Heart left ventricle (tissue), 16 donors: ENCODE measurements at regions of chr1 and their contacts with region 1.

Region 1: GRCh38 chr1:77538956-77539518 is 143.4 kb downstream of the ZZZ3 start:
- DNase-seq: peak in 2 of 5 donors; percentile 29 to 33
- ATAC-seq: peak; percentile 54 to 84 (median 69)
- H3K4me3 ChIP-seq: no peak overlapping the region
- H3K27ac ChIP-seq: peak overlapping the region in 8 of 12 donors; percentile 11 to 68 (median 44)
- H3K4me1 ChIP-seq: peaks cover 0 to 17% (median 6%) of the 10 kb centered on the region in 12 donors
- H3K27me3 ChIP-seq: no peaks in the 10 kb centered on the region
- CTCF ChIP-seq: no peak
- POLR2A ChIP-seq: no peak

Region 2: GRCh38 chr1:77143529-77144121 is 395.4 kb before region 1 on chr1:
- intact Hi-C with region 1: loop called in 7 of 10 experiments (anchors 5 to 10 kb)
- DNase-seq: no peak
- ATAC-seq: no peak
- H3K4me3 ChIP-seq: no peak overlapping the region
- H3K27ac ChIP-seq: no peak overlapping the region
- H3K4me1 ChIP-seq: no peaks in the 10 kb centered on the region
- H3K27me3 ChIP-seq: no peaks in the 10 kb centered on the region
- CTCF ChIP-seq: peak in 9 of 12 donors; percentile 14 to 46 (median 31)
- POLR2A ChIP-seq: no peak

Region 3: GRCh38 chr1:77156214-77156613 is 382.8 kb before region 1 on chr1:
- intact Hi-C with region 1: loop called in 1 of 10 experiments (anchors 5 kb)
- DNase-seq: no peak
- ATAC-seq: no peak
- H3K4me3 ChIP-seq: no peak overlapping the region
- H3K27ac ChIP-seq: no peak overlapping the region
- H3K4me1 ChIP-seq: no peaks in the 10 kb centered on the region
- H3K27me3 ChIP-seq: no peaks in the 10 kb centered on the region
- CTCF ChIP-seq: no peak
- POLR2A ChIP-seq: no peak

Region 4: DNA sequence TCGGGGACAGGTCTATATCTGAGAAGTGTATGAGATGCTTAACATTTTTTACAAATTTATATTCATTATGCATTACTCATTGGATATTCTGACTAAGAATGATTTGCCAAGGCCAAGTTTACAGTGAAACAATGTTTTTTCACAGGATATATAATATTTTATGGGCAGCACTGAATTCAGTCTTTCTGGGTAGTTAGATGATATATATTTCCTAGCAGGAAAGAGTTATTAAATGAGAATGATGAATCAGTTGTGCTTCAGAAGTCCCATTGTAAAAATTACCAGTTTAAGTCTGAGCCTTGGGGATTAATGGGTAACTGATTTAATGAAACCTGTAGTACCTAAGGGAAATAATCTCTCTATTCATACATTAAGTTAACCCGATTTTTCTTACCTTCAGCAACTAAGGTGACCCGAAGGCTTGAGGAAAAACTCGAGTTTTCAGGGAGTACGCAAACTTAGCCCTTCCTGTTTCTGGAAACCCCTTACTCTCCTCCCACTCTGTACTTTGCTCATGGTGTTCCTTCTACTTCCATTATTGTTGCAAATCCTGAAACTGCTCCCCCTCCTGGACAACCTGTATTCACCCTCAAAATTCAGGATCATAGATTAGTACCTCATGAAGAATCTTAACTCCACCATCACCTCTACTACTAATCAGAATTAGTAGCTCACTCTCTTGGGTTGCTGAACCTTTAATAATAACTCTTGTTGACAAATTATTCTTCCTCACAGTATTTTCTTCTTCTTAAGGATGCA is 122.2 kb before region 1 on chr1:
- intact Hi-C with region 1: no loop called
- DNase-seq: no peak
- ATAC-seq: no peak
- H3K4me3 ChIP-seq: no peak overlapping the region
- H3K27ac ChIP-seq: no peak overlapping the region
- H3K4me1 ChIP-seq: peaks cover 0 to 25% (median 0%) of the 10 kb centered on the region in 12 donors
- H3K27me3 ChIP-seq: peaks cover 0 to 17% (median 0%) of the 10 kb centered on the region in 9 donors
- CTCF ChIP-seq: peak in 5 of 12 donors; percentile 6 to 30 (median 16)
- POLR2A ChIP-seq: no peak